ENCODE measurements at regions of chr12 and their contacts with region 1.

Region 1: DNA sequence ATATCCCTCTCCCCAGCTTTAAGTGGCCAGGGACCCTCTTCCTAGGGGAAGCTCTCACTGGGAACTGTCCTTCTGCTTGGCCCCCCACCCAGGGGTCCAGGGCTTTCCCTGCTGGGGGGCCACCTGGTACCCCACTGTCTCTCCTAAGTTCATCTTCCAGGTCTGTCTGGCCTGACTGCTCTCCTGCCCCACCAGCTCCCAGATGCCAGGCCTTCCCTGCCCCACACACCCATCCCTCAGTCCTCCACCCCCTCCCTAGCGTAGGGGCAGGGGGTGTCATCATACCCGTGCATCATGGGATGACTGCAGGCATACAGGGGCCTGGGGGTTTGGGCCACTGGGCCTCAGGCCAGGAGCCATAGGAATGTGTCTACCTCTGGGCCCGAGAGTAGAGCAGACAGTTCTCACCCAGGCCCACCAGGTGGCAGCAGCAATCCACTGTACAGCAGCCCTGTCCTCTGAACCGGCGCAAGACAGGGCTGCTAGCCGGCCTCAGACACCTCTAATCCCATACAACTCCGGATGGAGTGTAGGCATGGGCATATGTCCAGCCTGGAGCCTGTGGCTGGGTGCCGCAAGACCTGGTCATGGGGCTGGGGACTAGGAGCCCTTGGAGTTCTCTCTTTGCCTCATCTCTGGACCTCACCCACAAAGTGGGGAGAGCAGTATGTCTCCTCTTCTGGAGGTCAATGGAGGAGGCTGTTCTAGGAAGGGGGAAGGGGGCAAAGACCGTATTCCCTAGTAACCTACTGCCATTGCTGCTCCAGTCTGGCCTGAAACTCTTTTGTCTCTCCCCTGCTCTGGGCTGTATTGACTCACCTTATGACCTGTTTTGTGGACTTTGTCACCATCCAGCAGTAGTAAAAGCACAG is 10.0 kb upstream of the SMARCD1 start:
- DNase-seq: peak; percentile 88 to 90 (median 88)
- ATAC-seq: peak; percentile 94 to 96 (median 94)
- H3K4me3 ChIP-seq: peak overlapping the region in 1 of 3 donors; percentile 14
- H3K27ac ChIP-seq: no peak overlapping the region
- H3K4me1 ChIP-seq: peaks cover 0 to 7% (median 0%) of the 10 kb centered on the region in 4 donors
- H3K27me3 ChIP-seq: no peaks in the 10 kb centered on the region
- CTCF ChIP-seq: peak; percentile 94 to 98 (median 96)
- POLR2A ChIP-seq: no peak

Region 2: DNA sequence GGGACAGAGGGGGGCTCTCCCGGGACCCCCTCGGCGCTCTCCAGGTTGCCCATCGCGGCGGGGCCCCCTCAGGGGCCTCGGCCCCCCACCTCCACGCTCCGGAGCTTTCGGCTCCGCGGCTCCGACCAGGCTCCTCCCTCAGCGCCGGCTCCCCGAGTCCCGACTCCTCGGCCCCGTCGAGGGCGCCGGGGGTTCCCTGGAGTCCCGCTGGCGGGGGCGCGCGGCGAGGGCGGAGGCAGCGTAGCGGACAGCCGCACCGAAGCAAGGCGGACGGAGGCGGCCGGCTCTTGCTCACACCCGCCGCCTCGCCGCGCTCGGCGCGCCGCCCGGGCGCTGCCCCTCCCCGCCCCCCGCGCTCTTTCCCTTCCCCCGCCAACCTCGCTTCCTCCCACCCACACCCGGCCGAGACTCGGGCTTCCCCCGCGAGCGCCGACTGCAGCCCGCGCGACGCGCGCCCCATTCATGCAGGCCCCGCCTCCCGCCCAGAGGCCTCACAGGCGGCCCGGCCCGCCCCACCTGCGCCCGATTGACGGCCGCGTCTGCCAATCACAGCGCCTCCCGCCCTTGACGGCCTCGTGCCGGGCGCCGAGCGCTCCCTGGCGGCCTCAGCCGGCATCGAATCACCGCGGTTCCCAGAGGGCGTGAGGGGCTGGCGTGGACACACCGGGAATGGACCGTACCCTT is 367.9 kb before region 1 on chr12 and contains the start of gene FMNL3:
- intact Hi-C with region 1: no loop called
- DNase-seq: peak; percentile 98 to 99 (median 98)
- ATAC-seq: peak; percentile 99 to 100 (median 100)
- H3K4me3 ChIP-seq: peak within 1 kb of the TSS; percentile 52 to 68 (median 63)
- H3K27ac ChIP-seq: peak within 1 kb of the TSS; percentile 60 to 88 (median 72)
- H3K4me1 ChIP-seq: no peaks in the 10 kb centered on the region
- H3K27me3 ChIP-seq: no peaks in the 10 kb centered on the region
- CTCF ChIP-seq: peak; percentile 91 to 98 (median 94)
- POLR2A ChIP-seq: no peak
- total RNA-seq, gene FMNL3: 2.1 to 4.9 (median 2.9) TPM

Region 3: GRCh38 chr12:49920241-49920921 is 154.8 kb before region 1 on chr12:
- intact Hi-C with region 1: no loop called
- DNase-seq: no peak
- ATAC-seq: peak in 1 of 4 donors; percentile 25
- H3K4me3 ChIP-seq: no peak overlapping the region
- H3K27ac ChIP-seq: no peak overlapping the region
- H3K4me1 ChIP-seq: no peaks in the 10 kb centered on the region
- H3K27me3 ChIP-seq: no peaks in the 10 kb centered on the region
- CTCF ChIP-seq: no peak
- POLR2A ChIP-seq: no peak

Region 4: GRCh38 chr12:49967042-49967776 is 108.0 kb before region 1 on chr12:
- intact Hi-C with region 1: loop called (anchors 5 kb)
- DNase-seq: peak; percentile 91 to 94 (median 93)
- ATAC-seq: peak; percentile 77 to 83 (median 79)
- H3K4me3 ChIP-seq: peak overlapping the region; percentile 12 to 41 (median 29)
- H3K27ac ChIP-seq: no peak overlapping the region
- H3K4me1 ChIP-seq: peaks cover 0 to 33% (median 3%) of the 10 kb centered on the region in 4 donors
- H3K27me3 ChIP-seq: no peaks in the 10 kb centered on the region
- CTCF ChIP-seq: peak; percentile 67 to 90 (median 70)
- POLR2A ChIP-seq: no peak

Region 5: GRCh38 chr12:49974231-49974675 is 100.9 kb before region 1 on chr12:
- intact Hi-C with region 1: loop called (anchors 5 kb)
- DNase-seq: peak; percentile 73 to 80 (median 77)
- ATAC-seq: peak; percentile 86 to 90 (median 89)
- H3K4me3 ChIP-seq: no peak overlapping the region
- H3K27ac ChIP-seq: no peak overlapping the region
- H3K4me1 ChIP-seq: no peaks in the 10 kb centered on the region
- H3K27me3 ChIP-seq: no peaks in the 10 kb centered on the region
- CTCF ChIP-seq: peak; percentile 48 to 72 (median 62)
- POLR2A ChIP-seq: no peak

Region 6: GRCh38 chr12:50174971-50175715 is 100.0 kb after region 1 on chr12:
- intact Hi-C with region 1: loop called (anchors 5 to 10 kb)
- DNase-seq: no peak
- ATAC-seq: peak; percentile 69 to 85 (median 78)
- H3K4me3 ChIP-seq: no peak overlapping the region
- H3K27ac ChIP-seq: no peak overlapping the region
- H3K4me1 ChIP-seq: no peaks in the 10 kb centered on the region
- H3K27me3 ChIP-seq: no peaks in the 10 kb centered on the region
- CTCF ChIP-seq: peak; percentile 68 to 79 (median 70)
- POLR2A ChIP-seq: no peak

Measured in right lobe of liver (tissue), 6 donors.